PC-9 (cell line): ENCODE measurements at regions of chr11 and their contacts with region 1.

Region 1: DNA sequence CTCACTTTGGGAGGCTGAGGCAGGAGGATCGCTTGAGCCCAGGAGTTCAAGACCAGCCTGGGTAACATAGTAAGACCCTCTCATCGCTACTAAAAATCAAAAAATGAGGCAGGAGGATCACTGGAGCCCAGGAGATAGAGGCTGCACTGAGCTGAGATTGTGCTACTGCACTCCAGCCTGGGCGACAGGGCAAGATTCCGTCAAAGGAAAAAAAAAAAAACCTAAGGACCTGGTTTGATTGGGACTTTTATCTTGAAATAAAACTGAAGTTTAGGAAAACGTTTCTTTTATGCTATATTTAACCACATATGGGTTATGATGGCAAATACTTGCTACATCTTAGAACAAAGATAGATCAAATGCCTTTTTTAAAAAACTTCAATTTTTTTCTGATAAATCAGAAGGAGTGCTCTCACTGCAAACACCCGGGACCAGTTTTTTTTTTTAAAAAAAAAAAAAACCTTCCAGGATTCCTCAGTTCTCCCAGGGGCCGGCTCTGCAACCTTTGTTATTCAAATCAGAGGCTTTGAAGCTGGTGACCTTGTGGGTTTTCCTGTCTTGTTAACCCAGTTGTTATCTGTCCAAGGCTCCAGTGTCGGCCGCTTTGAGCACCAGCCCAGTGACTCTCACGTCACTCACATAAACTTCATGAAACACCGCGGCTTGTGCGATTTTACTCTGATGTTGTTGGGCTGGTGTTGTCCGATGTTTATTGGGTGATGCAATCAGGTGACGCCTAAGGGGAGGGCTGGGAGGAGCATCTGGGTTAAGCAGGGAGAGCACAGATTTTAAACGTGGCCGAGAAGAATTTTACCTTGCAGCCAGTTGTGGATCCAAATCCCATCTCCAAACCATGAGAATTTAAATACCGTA is 24.7 kb upstream of the SLC22A12 start:
- DNase-seq: peak; percentile 82 to 89
- H3K4me3 ChIP-seq: peak overlapping the region; percentile 46
- H3K27ac ChIP-seq: peak overlapping the region; percentile 45; the same call in 1 of the 2 replicates
- H3K4me1 ChIP-seq: peaks cover 11% of the 10 kb centered on the region
- H3K27me3 ChIP-seq: no peaks in the 10 kb centered on the region
- CTCF ChIP-seq: no peak

Region 2: DNA sequence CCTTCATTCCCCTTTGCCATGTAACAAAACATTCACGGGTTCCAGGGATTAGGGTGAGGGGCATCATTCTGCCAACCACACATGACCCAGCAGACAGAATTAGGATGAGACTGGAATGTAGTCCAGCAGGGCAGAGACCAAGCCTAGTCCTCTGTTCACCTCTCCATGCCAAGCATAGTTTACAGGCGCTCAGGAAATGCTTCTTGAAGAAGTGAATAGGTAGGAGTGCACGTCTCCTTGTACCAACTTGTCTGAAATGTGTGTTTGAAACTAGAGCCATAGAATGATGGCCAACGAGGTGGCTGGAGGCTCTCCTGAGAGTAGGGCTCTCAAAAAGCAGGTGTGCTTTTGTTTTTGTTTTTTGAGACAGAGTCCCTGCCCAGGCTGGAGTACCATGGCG is 744.9 kb before region 1 on chr11:
- CTCF ChIA-PET with region 1: no interaction called
- POLR2A ChIA-PET with region 1: interaction called, 10 read pairs
- intact Hi-C with region 1: no loop called
- DNase-seq: no peak
- H3K4me3 ChIP-seq: no peak overlapping the region
- H3K27ac ChIP-seq: no peak overlapping the region
- H3K4me1 ChIP-seq: no peaks in the 10 kb centered on the region
- H3K27me3 ChIP-seq: no peaks in the 10 kb centered on the region
- CTCF ChIP-seq: no peak

Region 3: DNA sequence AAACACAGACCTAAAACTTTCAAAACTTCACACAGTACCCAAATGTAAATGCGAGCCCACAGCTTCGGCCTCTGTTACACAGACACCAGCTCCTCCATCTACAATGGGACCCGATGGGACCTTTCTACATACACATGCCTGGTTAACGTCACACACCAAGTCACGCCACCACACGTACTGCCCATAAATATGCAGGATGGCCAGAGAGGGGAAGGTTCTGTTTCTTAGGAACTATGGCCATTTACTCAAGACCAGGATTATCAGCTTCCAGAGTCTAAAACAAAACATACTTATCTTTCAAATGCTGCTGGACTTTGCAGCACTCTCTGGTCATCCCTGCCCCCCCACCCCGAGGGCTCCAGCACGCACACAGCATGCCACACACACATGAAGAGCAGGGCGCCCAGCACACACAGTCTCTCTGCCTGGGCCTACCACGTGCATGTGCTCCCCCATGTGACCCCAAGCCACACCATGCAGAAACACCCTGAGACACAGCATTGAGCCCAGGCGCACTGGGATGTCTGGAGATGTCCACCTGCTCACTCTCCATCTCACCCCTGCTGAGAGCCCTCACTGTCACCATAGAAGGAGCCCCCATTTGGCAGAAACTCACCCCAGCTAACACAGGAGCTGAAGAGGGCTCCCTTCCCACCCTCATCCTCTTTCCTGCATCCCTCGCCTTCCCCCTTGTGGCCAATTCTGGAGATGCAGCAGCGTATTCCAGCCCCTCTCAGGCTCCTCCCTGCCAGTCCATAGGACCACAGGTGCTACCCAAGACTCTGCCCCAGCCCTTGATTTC is 86.5 kb after region 1 on chr11:
- CTCF ChIA-PET with region 1: no interaction called
- POLR2A ChIA-PET with region 1: no interaction called
- intact Hi-C with region 1: no loop called
- DNase-seq: peak; percentile 46 to 88
- H3K4me3 ChIP-seq: no peak overlapping the region
- H3K27ac ChIP-seq: no peak overlapping the region
- H3K4me1 ChIP-seq: peaks cover 17% of the 10 kb centered on the region
- H3K27me3 ChIP-seq: no peaks in the 10 kb centered on the region
- CTCF ChIP-seq: peak; percentile 97